Endothelial cell of umbilical vein (primary cell): ENCODE measurements at regions of chr20 and their contacts with region 1.

Region 1: GRCh38 chr20:2688041-2688591 is 4.5 kb upstream of the EBF4 start:
- DNase-seq: peak; percentile 49
- H3K4me3 ChIP-seq: no peak overlapping the region
- H3K27ac ChIP-seq: no peak overlapping the region
- H3K4me1 ChIP-seq: peaks cover 4% of the 10 kb centered on the region
- H3K27me3 ChIP-seq: peaks cover 14 to 32% of the 10 kb centered on the region in 2 experiments
- CTCF ChIP-seq: peak; percentile 66 to 71
- POLR2A ChIP-seq: no peak

Region 2: GRCh38 chr20:2451939-2452732 is 236.0 kb before region 1 on chr20:
- CTCF ChIA-PET with region 1: no interaction called
- POLR2A ChIA-PET with region 1: no interaction called
- dilution Hi-C with region 1: no loop called
- intact Hi-C with region 1: no loop called
- DNase-seq: peak; percentile 62
- H3K4me3 ChIP-seq: no peak overlapping the region
- H3K27ac ChIP-seq: no peak overlapping the region
- H3K4me1 ChIP-seq: no peaks in the 10 kb centered on the region
- H3K27me3 ChIP-seq: no peaks in the 10 kb centered on the region
- CTCF ChIP-seq: peak; percentile 84 to 90
- POLR2A ChIP-seq: no peak

Region 3: DNA sequence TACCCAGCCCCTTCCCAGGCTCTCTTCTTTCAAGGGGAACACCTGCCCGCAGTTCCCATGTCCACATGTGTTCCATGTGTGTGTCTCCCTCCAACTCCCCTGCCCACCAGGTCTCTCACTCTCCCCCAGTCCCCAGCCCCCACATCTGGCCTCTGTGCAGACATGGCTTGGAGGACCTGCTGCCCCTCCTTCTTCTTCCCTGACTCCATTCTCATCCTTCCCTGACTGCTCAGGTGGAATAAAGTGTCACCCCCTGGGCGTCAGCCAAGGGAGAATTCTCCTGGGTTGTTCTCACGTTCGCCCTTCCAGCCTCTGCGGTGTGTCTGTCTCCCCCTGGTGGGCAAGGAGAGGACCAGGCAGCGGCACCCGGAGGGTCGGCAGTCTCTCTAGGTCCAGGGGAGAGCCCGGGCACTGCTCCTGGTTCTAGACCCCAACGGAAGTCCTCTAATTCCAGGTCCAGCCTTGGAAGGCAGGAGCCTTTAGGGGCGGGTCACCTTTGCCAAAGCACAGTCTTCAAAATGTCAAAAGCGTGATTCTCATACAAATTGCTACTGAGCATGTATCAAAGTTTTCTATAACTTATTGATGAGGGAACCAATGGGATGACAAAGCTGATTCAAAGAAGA is 54.9 kb after region 1 on chr20:
- CTCF ChIA-PET with region 1: interaction called, 23 read pairs
- POLR2A ChIA-PET with region 1: no interaction called
- dilution Hi-C with region 1: no loop called
- intact Hi-C with region 1: loop called (anchors 1 kb)
- DNase-seq: peak; percentile 54
- H3K4me3 ChIP-seq: no peak overlapping the region
- H3K27ac ChIP-seq: no peak overlapping the region
- H3K4me1 ChIP-seq: no peaks in the 10 kb centered on the region
- H3K27me3 ChIP-seq: peaks cover 8 to 20% of the 10 kb centered on the region in 2 experiments
- CTCF ChIP-seq: peak; percentile 88 to 97
- POLR2A ChIP-seq: no peak

Region 4: DNA sequence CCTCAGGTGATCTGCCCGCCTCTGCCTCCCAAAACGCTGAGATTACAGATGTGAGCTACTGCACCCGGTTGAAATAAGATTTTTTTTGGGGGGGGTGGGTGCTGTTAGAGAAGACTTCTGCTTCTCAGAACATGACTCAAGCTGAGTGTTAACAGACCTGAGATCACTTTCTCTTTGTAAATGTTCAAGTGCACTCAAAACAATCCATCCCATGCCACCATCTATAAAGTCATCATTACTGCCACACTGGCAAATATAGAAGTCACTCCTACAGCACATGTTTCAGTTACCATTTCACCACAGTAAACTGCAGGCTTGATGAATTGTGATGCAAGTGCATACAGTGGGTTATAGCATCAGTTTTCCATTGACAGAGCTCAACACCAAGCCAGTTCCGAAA is 161.4 kb after region 1 on chr20:
- CTCF ChIA-PET with region 1: interaction called, 8 read pairs
- POLR2A ChIA-PET with region 1: no interaction called
- dilution Hi-C with region 1: no loop called
- intact Hi-C with region 1: loop called (anchors 2 kb)
- DNase-seq: no peak
- H3K4me3 ChIP-seq: no peak overlapping the region
- H3K27ac ChIP-seq: no peak overlapping the region
- H3K4me1 ChIP-seq: no peaks in the 10 kb centered on the region
- H3K27me3 ChIP-seq: no peaks in the 10 kb centered on the region
- CTCF ChIP-seq: no peak
- POLR2A ChIP-seq: no peak

Region 5: DNA sequence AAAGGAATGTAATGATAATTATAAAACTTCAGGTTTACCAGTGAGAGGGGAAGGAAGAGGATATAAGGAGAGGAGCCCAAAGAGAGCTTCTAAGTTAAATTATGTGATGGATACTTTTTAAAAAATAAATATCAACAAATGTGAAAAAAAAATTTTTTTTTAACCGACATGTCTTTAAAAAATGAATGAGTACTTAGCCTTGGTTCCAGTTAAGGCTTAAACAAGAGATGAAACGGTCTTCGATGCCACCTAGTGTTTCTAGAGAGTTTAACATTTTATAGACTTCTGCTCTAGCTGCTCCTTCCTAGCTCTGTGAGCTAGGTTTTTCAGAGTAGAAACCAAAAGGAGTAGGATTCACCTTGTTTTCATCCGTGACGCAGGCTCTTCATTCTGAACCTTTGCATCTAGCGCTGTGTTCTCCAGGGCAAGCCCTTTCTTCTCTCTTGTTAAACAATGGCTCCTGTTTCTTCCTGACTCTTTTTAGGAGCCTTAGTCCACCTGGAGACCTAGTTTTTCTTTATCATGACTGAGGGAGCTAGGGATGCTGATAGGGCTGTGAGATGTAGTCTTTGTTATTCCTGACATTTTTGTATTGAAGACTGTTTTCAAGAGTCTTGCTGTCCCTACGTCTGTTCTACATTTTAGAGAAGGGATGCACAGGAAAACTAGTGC is 312.9 kb after region 1 on chr20:
- CTCF ChIA-PET with region 1: no interaction called
- POLR2A ChIA-PET with region 1: no interaction called
- dilution Hi-C with region 1: no loop called
- intact Hi-C with region 1: loop called (anchors 2 kb)
- DNase-seq: peak; percentile 80
- H3K4me3 ChIP-seq: no peak overlapping the region
- H3K27ac ChIP-seq: no peak overlapping the region
- H3K4me1 ChIP-seq: no peaks in the 10 kb centered on the region
- H3K27me3 ChIP-seq: no peaks in the 10 kb centered on the region
- CTCF ChIP-seq: peak; percentile 15 to 43
- POLR2A ChIP-seq: no peak